Transverse colon (tissue), 4 donors: ENCODE measurements at regions of chr9 and their contacts with region 1.

Region 1: DNA sequence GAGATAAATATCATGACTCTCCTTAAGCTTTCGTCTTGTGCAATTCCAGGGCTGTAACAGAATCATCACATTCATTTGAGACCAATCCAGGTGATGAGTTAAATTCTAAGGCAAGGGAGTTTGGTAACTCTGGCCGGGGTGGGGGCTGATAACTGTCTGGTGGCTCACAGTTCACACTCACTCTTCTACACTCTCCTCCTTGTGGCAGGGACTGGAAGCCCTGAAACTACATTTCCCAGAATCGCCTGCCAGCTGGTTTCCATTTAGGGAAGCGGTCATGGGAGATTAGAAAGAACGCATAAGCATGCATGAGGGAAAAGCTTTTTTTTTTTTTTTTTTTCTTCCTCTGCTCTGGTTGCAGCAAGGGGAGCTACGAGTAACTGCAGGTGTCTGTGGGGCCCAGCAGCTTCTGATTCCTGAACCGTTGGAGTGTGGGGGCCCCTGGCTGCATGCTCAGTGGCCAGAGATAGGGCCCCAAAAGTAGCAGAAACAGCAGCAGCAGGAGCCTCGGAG is 154.8 kb upstream of the TBC1D2 start:
- DNase-seq: no peak
- H3K4me3 ChIP-seq: no peak overlapping the region
- H3K27ac ChIP-seq: no peak overlapping the region
- H3K4me1 ChIP-seq: no peaks in the 10 kb centered on the region
- H3K27me3 ChIP-seq: no peaks in the 10 kb centered on the region
- CTCF ChIP-seq: no peak
- EP300 ChIP-seq: no peak
- POLR2A ChIP-seq: no peak

Region 2: DNA sequence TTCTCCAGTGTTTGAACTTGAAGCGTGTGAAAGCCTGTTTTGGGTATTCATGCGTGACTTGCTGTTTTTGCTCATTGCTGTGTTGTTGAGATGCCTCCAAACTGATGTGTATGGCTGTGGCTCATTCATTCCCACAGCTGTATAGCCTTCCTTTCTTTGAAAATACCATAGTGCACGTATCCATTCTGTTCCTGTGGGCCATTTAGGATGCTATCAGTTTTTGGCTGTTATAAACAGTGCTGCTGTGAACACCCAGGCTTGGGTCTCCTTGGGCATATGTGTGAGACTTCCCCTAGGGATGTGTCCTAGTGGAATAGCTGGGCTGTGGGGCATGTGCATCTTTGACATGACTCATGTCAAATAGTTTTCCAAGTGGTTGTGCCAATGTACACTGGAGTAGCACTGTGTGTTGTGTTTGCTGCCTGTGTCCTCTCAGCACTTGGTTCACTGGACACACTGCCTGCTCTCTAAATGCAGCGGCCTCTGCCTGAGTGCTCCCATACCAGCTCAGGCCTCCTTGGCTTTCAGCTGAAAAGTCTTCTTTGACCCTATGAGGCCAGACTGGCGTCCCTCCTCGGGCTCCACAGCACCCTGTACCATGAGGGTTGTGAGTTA is 52.2 kb before region 1 on chr9:
- in situ Hi-C with region 1: loop called in 1 of 4 experiments (anchors 10 kb)
- intact Hi-C with region 1: no loop called
- DNase-seq: no peak
- H3K4me3 ChIP-seq: no peak overlapping the region
- H3K27ac ChIP-seq: no peak overlapping the region
- H3K4me1 ChIP-seq: no peaks in the 10 kb centered on the region
- H3K27me3 ChIP-seq: no peaks in the 10 kb centered on the region
- CTCF ChIP-seq: no peak
- EP300 ChIP-seq: no peak
- POLR2A ChIP-seq: no peak

Region 3: DNA sequence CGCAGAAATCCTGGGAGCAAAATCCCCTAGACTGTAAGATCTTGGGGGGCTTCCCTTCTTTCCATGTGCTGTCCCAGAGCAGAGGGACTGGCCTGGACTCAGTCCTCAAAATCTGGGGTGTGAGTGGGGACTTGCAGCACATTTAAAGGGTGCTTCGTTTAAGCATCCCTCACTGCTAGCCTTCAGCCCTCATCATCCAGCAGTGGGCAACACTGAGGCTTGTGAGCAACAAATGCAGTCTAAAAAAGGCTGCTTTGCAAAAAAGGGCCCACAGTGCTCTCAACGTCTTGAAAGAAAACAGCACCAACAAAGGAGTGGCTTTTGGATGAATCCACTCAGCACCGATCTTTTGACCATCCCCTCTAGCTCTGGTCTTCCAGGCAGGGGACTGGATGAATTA is 26.5 kb before region 1 on chr9:
- in situ Hi-C with region 1: no loop called
- intact Hi-C with region 1: no loop called
- DNase-seq: no peak
- H3K4me3 ChIP-seq: no peak overlapping the region
- H3K27ac ChIP-seq: no peak overlapping the region
- H3K4me1 ChIP-seq: no peaks in the 10 kb centered on the region
- H3K27me3 ChIP-seq: no peaks in the 10 kb centered on the region
- CTCF ChIP-seq: no peak
- EP300 ChIP-seq: no peak
- POLR2A ChIP-seq: no peak